ENCODE measurements at regions of chr6 and their contacts with region 1.

Region 1: DNA sequence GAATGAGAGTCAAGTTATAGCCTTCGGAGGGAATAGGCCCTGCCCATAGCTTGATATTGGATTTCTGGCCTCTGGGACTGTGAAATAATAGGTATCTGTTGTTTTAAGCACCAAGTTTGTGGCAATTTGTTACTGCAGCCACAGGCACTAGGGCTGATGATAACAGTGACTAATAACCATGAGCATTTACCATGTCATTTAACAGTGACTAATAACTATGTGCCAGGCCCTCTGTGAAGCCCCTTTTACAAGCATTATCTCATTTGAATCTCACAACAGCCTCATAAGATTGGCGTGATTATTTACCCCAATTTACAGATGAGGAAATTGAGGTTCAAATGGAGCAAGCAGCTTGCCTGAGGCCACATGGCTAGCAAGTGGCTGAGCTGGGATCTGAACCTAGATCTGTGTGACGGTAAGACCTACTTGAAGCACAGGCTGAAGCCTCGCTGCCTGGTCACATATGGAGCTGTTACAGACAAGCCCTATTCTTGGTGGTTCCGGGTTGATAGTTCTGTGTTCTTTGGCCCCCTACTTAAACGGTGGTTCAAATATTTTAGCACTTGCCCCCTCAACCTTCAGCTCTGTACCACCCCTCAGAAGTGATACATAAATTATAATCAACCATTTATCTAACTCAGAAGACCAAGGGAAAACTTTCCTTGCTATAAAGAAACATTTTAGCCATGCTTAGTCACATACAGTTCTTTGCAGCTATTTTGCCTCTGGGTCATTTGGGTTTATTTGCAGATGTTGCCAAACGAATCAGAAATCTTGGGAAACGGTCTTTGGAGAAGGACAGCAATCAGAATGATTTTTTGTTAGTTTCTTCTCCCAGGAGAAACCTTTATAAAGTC is 98.3 kb downstream of the ELOVL5 start:
- DNase-seq: no peak
- ATAC-seq: peak in 3 of 4 donors; percentile 31 to 52 (median 32)
- H3K4me3 ChIP-seq: no peak overlapping the region
- H3K27ac ChIP-seq: peak overlapping the region in 11 of 12 donors; percentile 1 to 81 (median 26)
- H3K4me1 ChIP-seq: peaks cover 0 to 19% (median 0%) of the 10 kb centered on the region in 12 donors
- H3K27me3 ChIP-seq: no peaks in the 10 kb centered on the region
- CTCF ChIP-seq: no peak
- POLR2A ChIP-seq: no peak

Region 2: GRCh38 chr6:53033764-53034163 is 216.6 kb before region 1 on chr6:
- intact Hi-C with region 1: no loop called
- DNase-seq: no peak
- ATAC-seq: peak in 2 of 4 donors; percentile 16 to 25
- H3K4me3 ChIP-seq: no peak overlapping the region
- H3K27ac ChIP-seq: peak overlapping the region in 7 of 12 donors; percentile 32 to 62 (median 55)
- H3K4me1 ChIP-seq: peaks cover 0 to 52% (median 25%) of the 10 kb centered on the region in 12 donors
- H3K27me3 ChIP-seq: no peaks in the 10 kb centered on the region
- CTCF ChIP-seq: no peak
- POLR2A ChIP-seq: no peak

Region 3: GRCh38 chr6:53189554-53189953 is 60.9 kb before region 1 on chr6:
- intact Hi-C with region 1: loop called in 1 of 10 experiments (anchors 5 kb)
- DNase-seq: no peak
- ATAC-seq: no peak
- H3K4me3 ChIP-seq: no peak overlapping the region
- H3K27ac ChIP-seq: no peak overlapping the region
- H3K4me1 ChIP-seq: peaks cover 0 to 13% (median 5%) of the 10 kb centered on the region in 12 donors
- H3K27me3 ChIP-seq: no peaks in the 10 kb centered on the region
- CTCF ChIP-seq: no peak
- POLR2A ChIP-seq: no peak

Region 4: DNA sequence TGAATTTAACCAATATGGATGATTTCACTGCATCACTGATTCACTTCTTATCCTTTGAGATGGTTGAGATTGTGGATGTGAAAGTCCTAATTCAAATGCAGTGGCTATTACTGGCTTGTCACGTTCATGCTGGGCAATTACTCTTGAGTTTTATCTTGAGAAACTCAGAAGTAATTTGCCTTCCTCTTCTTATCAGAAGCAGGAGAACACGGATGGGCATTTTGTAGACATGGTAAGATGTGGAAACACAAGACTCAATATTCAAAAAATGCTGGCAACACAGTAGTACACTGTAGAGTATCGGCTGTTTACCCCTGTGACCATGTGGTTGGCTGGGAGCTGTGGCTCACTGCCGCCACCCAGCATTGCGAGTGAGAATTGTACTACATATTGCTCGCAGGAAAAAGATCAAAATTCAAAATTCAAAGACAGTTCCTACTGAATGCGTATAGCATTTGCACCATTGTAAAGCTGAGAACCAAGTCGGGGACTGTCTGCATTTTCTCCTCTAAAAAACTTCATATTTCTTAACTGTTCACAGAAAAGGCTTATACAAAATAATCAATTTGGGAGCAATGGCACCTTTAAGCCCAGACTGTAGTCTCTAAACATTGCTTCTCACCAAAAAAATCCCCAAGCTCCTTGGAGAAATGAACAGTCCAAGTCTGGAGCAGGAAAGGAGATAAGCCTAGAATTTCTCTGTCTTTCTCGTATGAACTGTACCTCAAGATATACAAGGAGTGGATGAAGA is 160.3 kb after region 1 on chr6:
- intact Hi-C with region 1: no loop called
- DNase-seq: peak; percentile 23 to 68 (median 39)
- ATAC-seq: peak; percentile 75 to 90 (median 84)
- H3K4me3 ChIP-seq: no peak overlapping the region
- H3K27ac ChIP-seq: no peak overlapping the region
- H3K4me1 ChIP-seq: peaks cover 0 to 5% (median 0%) of the 10 kb centered on the region in 12 donors
- H3K27me3 ChIP-seq: no peaks in the 10 kb centered on the region
- CTCF ChIP-seq: peak; percentile 52 to 82 (median 70)
- POLR2A ChIP-seq: no peak

Measured in heart left ventricle (tissue), 16 donors.